Right ventricle myocardium inferior (tissue), 1 donor: ENCODE measurements at regions of chr5 and their contacts with region 1.

Region 1: GRCh38 chr5:107571621-107572536 is 98.9 kb downstream of the EFNA5 start:
- DNase-seq: peak; percentile 94
- ATAC-seq: peak; percentile 88

Region 2: GRCh38 chr5:107129051-107129450 is 442.8 kb before region 1 on chr5:
- intact Hi-C with region 1: loop called (anchors 10 kb)
- DNase-seq: no peak
- ATAC-seq: no peak

Region 3: DNA sequence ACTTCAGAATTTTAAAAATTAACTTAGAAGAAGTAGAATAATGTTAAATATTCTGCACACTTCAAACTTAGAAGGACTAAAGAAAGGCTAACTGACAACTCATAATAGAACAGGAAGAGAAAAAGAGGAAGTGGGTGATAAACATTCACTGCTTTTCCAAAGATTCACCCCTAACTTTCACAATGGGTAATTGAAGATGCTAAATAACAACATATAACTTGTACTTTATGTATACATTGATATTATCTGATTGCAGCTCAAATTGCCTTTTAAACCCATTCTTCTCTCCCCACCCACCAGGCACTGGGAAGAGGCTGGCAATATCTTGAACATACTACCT is 277.7 kb before region 1 on chr5:
- intact Hi-C with region 1: loop called (anchors 10 kb)
- DNase-seq: no peak
- ATAC-seq: no peak

Region 4: GRCh38 chr5:107389130-107389774 is 182.6 kb before region 1 on chr5:
- intact Hi-C with region 1: loop called (anchors 5 kb)
- DNase-seq: no peak
- ATAC-seq: peak; percentile 74

Region 5: DNA sequence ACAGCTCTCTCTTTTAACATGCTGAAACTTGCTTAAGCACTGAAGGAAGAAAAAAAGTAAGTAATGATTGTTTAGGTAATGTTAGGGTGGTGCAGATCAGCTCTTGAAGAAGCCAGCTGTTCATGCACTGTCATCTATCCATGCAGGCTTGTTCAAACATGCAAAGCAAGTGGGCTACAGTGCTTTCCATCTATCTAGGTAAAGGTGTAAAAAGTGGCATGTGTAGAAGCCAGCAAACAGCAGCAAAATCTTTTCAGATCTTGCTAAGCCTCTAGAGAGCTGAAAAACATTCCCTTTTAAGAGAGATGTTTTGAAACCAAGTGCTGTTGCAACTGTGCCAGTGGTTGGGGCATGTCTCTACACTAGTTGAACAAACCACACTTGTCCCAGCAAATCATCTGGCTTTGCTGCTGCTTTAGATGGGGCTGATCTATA is 115.6 kb before region 1 on chr5:
- intact Hi-C with region 1: no loop called
- DNase-seq: no peak
- ATAC-seq: no peak

Region 6: GRCh38 chr5:107476783-107477182 is 95.1 kb before region 1 on chr5:
- intact Hi-C with region 1: loop called (anchors 10 kb)
- DNase-seq: no peak
- ATAC-seq: peak; percentile 75

Region 7: GRCh38 chr5:107812570-107813141 is 240.8 kb after region 1 on chr5:
- intact Hi-C with region 1: no loop called
- DNase-seq: no peak
- ATAC-seq: peak; percentile 82